ENCODE measurements at regions of chr5 and their contacts with region 1.

Region 1: DNA sequence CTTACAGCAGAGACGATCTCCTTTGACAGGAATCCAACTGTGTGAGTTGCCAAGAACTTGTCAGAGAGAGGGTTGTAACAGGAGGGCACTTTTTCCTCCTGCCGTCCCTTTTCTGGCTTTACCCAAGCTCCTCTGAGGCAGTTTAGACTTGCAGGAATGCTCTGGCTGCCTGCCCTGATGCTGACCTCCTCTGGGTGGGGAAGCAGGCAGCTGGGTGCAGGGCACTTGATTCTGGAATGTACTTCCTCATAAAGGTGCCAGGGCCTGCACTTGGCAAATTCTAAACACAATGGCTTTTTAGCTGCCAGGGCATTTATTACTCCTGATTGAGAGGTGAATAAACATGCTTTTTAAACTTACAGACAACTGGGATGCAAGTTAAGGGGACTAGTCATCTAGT is 190.4 kb downstream of the EPB41L4A start:
- DNase-seq: peak; percentile 96
- H3K4me3 Mint-ChIP-seq: peak overlapping the region; percentile 67
- H3K27ac Mint-ChIP-seq: no peak overlapping the region
- H3K4me1 Mint-ChIP-seq: peaks cover 28% of the 10 kb centered on the region
- H3K27me3 Mint-ChIP-seq: no peaks in the 10 kb centered on the region
- CTCF ChIP-seq: no peak

Region 2: DNA sequence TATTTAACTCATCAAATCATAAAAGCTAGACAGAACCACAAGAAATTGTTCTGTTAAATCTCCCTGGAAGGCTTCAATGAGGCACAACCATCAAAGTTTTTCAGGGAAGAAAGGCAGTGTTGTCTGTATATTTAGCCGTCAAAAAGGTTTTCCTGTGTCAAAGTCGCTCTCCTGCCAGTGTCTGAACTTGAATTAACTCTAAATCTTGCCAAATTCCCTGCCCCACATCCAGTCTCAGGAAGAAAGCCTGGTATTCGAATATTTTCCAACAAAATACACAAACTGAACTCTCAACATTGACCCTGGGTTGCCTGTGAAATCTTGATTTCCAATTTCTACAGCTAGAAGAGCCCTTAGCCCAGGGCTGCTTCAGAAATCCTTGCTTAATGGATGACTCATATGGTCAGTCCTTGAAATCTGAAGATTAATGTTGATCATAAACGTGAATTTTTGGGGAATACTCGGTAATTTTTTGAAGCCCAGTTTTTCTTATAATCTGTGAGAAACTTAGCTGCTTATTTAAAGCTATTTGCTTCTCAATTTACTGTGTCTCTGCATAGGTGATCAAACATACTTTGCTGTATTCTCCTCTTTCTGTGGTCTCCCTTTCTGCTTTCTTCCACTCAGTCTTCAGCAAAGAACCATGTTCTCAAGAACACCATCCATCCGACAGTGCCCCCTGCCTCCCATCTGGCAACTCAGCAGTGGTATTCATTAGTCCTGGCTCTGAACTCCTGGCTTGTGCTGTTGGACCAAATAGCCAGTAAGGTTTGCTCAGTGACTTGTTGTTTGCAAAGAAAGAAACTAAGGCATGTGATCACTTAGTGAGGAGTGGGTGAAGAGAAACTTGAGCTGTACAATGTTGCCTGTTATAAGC is 530.5 kb before region 1 on chr5:
- CTCF ChIA-PET with region 1: no interaction called
- intact Hi-C with region 1: no loop called
- DNase-seq: no peak
- H3K4me3 Mint-ChIP-seq: no peak overlapping the region
- H3K27ac Mint-ChIP-seq: no peak overlapping the region
- H3K4me1 Mint-ChIP-seq: peaks cover 16% of the 10 kb centered on the region
- H3K27me3 Mint-ChIP-seq: no peaks in the 10 kb centered on the region
- CTCF ChIP-seq: no peak

Region 3: DNA sequence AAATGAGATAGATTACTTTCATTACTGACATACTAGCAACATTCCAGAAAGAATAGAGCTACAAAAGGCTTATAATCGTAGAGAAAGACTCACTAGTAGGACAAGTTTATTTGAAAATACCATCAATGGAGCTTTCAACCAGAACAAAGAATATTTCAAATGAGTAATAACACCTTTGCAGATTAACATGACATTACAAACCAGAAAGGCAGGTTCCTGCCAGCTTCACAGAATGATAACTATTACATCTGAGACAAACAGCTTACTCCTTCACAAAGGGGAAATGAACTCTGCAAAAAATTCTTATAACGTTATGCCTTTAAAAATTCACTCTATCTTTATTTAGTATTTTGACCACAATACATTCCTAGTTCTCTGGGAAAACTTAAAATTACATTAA is 87.3 kb after region 1 on chr5:
- CTCF ChIA-PET with region 1: no interaction called
- intact Hi-C with region 1: loop called (anchors 5 kb)
- DNase-seq: peak; percentile 39
- H3K4me3 Mint-ChIP-seq: no peak overlapping the region
- H3K27ac Mint-ChIP-seq: peak overlapping the region; percentile 60
- H3K4me1 Mint-ChIP-seq: peaks cover 49% of the 10 kb centered on the region
- H3K27me3 Mint-ChIP-seq: no peaks in the 10 kb centered on the region
- CTCF ChIP-seq: no peak

Region 4: GRCh38 chr5:112338681-112339337 is 110.1 kb after region 1 on chr5:
- CTCF ChIA-PET with region 1: no interaction called
- intact Hi-C with region 1: loop called (anchors 5 kb)
- DNase-seq: peak; percentile 63
- H3K4me3 Mint-ChIP-seq: peak overlapping the region; percentile 27
- H3K27ac Mint-ChIP-seq: peak overlapping the region; percentile 81
- H3K4me1 Mint-ChIP-seq: peaks cover 72% of the 10 kb centered on the region
- H3K27me3 Mint-ChIP-seq: no peaks in the 10 kb centered on the region
- CTCF ChIP-seq: no peak